ENCODE measurements at regions of chr2 and their contacts with region 1.

Region 1: GRCh38 chr2:200735061-200735460 is 76.6 kb upstream of the BZW1 start:
- DNase-seq: peak in 8 of 10 donors; percentile 52 to 91 (median 70)
- H3K4me3 ChIP-seq: peak overlapping the region in 54 of 59 donors; percentile 0 to 65 (median 39)
- H3K27ac ChIP-seq: peak overlapping the region in 58 of 59 donors; percentile 9 to 94 (median 80)
- H3K27me3 ChIP-seq: peaks cover 0 to 4% (median 0%) of the 10 kb centered on the region in 45 donors
- CTCF ChIP-seq: no peak

Region 2: DNA sequence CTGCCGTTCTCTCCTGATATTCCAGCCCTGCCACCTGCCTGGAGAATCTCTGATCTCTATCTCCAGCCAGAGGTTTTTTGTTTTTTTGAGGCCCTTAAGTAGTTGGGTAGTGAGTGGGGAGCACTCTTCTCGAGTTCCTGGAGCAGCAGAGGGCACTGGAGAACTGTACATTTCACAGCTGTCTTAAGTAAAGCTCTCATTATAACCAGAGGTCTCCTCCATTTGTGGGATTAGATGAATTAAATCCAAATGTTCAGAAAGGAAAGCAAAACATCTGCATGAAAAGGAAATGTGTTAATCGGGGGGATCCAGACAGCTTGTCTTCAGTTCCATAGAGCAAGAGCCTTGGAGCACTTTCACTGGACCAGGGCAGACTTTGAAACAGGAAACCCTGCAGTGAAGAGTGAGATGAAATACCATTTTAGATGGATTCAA is 116.5 kb before region 1 on chr2:
- intact Hi-C with region 1: loop called in 1 of 2 experiments (anchors 1 kb)
- DNase-seq: peak in 2 of 10 donors; percentile 20 to 43
- H3K4me3 ChIP-seq: no peak overlapping the region
- H3K27ac ChIP-seq: peak overlapping the region in 10 of 59 donors; percentile 9 to 64 (median 36)
- H3K27me3 ChIP-seq: no peaks in the 10 kb centered on the region
- CTCF ChIP-seq: peak in 46 of 56 donors; percentile 12 to 71 (median 39)

Region 3: DNA sequence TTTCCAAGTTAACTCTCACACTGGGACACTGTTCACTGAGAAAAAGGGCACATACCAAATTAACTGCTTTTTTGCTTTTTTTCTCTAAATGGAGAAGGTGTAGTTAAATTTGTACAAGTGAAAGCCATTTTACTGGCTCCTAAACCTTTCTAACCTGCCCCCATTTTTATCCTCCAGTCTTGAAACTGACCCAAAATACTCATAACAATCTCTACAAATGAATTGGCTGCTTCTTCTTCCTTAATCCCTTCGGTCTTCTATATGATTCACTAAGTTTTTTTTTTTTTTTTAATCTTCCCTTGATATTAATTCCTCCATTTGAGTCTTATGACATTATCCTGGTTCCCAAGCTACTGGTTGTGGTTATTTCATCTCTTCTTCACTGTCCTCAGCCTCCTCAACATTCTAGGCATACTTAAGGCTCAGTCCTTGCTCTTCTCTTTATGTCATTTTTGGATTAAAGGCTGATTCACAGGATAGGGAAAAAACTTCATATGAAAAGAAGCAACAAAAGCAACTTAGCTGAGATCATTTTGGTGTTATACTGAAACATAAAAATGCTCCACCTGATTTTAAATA is 208.6 kb after region 1 on chr2:
- intact Hi-C with region 1: no loop called
- DNase-seq: no peak
- H3K4me3 ChIP-seq: no peak overlapping the region
- H3K27ac ChIP-seq: no peak overlapping the region
- H3K27me3 ChIP-seq: no peaks in the 10 kb centered on the region
- CTCF ChIP-seq: no peak